Activated CD4-positive, alpha-beta T cell treated with anti-CD3 and anti-CD28 coated beads for 36 hours (primary cell): ENCODE measurements at regions of chr16 and their contacts with region 1.

Region 1: GRCh38 chr16:78490431-78490830 is 391.0 kb downstream of the WWOX start:
- DNase-seq: no peak
- ATAC-seq: no peak
- H3K4me3 Mint-ChIP-seq: no peak overlapping the region
- H3K27ac Mint-ChIP-seq: no peak overlapping the region
- H3K4me1 Mint-ChIP-seq: no peaks in the 10 kb centered on the region
- H3K27me3 Mint-ChIP-seq: no peaks in the 10 kb centered on the region

Region 2: DNA sequence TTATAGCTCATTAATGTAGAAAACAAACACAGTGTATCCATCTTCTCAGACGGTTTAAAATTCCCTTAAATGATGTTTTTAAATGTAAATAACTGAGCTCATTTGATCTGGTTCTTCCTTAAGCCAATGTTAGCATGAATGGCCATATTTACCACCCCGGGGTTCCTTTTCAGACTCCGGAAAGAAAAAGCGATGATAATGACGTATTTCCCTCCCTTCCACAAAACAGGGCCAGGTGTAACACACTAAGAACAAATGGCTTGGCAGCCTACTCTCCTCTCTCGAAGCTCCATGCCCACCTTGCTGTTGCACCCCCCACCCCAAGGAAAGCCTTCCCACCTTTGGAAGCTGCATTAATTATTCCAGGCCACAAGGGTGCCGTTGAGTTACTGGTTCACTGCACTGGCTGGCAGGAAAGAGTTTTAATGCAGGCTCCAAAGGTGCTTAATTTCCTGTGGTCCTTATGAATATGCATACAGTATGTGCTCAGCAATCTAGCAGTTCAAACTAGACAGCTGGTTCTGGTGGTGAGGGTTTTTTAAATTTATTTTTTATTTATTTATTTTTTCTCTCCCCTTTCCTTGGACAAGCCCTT is 12.1 kb before region 1 on chr16:
- CTCF ChIA-PET with region 1: interaction called, 11 read pairs
- POLR2A ChIA-PET with region 1: no interaction called
- intact Hi-C with region 1: no loop called
- DNase-seq: peak; percentile 32
- ATAC-seq: peak; percentile 39
- H3K4me3 Mint-ChIP-seq: no peak overlapping the region
- H3K27ac Mint-ChIP-seq: no peak overlapping the region
- H3K4me1 Mint-ChIP-seq: no peaks in the 10 kb centered on the region
- H3K27me3 Mint-ChIP-seq: no peaks in the 10 kb centered on the region